MCF 10A (cell line): ENCODE measurements at regions of chr12 and their contacts with region 1.

Region 1: DNA sequence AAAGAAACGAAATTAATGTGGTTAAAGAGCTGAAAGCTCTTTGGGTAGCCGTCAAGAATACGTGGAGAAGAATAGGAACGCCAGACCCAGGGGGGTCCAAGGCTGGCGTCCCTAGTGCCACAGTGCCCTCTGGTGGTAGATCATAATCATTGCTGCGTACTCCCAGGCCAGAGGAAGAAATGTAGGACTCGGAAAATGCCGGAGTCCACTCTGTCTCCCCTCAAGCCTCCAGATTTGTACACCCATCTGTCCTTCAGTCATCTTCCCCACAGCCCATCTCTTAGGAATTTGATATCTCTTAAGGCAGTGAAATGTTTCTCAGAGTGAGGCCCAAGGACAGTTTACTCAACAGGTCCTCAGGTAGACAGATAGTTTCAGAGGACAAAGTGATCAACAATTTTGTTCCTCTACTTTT is 25.4 kb upstream of the PLEKHG6 start:
- DNase-seq: peak; percentile 76
- H3K4me3 Mint-ChIP-seq: no peak overlapping the region
- H3K27ac Mint-ChIP-seq: no peak overlapping the region
- H3K4me1 Mint-ChIP-seq: peaks cover 34% of the 10 kb centered on the region
- H3K27me3 Mint-ChIP-seq: no peaks in the 10 kb centered on the region
- CTCF ChIP-seq: peak; percentile 94

Region 2: DNA sequence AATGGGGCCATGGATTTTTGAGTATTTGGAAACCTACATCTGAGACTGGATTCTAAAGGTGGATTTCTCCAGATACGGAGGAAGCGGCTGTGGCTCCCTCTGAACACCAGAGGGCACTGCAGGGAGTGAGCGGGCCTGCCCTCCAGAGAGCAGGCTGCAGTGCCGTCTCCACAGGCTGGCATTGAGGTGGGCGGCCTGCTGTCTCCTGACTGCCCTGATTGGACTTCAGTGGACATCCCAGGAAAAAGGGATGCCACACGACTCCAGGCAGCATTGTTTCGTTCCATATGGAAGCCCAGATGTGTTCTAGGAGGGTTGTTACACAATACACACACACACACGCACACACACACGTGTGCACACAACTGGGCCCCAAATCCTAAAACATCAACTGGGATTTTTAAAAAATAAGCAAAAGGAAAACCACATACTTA is 319.1 kb before region 1 on chr12:
- CTCF ChIA-PET with region 1: interaction called, 7 read pairs
- POLR2A ChIA-PET with region 1: no interaction called
- intact Hi-C with region 1: loop called (anchors 1 kb)
- DNase-seq: peak; percentile 61
- H3K4me3 Mint-ChIP-seq: no peak overlapping the region
- H3K27ac Mint-ChIP-seq: no peak overlapping the region
- H3K4me1 Mint-ChIP-seq: no peaks in the 10 kb centered on the region
- H3K27me3 Mint-ChIP-seq: peaks cover 50% of the 10 kb centered on the region
- CTCF ChIP-seq: peak; percentile 69

Region 3: GRCh38 chr12:6056406-6057240 is 228.4 kb before region 1 on chr12:
- CTCF ChIA-PET with region 1: interaction called, 37 read pairs
- POLR2A ChIA-PET with region 1: interaction called, 4 read pairs
- intact Hi-C with region 1: no loop called
- DNase-seq: no peak
- H3K4me3 Mint-ChIP-seq: no peak overlapping the region
- H3K27ac Mint-ChIP-seq: no peak overlapping the region
- H3K4me1 Mint-ChIP-seq: no peaks in the 10 kb centered on the region
- H3K27me3 Mint-ChIP-seq: no peaks in the 10 kb centered on the region
- CTCF ChIP-seq: no peak

Region 4: DNA sequence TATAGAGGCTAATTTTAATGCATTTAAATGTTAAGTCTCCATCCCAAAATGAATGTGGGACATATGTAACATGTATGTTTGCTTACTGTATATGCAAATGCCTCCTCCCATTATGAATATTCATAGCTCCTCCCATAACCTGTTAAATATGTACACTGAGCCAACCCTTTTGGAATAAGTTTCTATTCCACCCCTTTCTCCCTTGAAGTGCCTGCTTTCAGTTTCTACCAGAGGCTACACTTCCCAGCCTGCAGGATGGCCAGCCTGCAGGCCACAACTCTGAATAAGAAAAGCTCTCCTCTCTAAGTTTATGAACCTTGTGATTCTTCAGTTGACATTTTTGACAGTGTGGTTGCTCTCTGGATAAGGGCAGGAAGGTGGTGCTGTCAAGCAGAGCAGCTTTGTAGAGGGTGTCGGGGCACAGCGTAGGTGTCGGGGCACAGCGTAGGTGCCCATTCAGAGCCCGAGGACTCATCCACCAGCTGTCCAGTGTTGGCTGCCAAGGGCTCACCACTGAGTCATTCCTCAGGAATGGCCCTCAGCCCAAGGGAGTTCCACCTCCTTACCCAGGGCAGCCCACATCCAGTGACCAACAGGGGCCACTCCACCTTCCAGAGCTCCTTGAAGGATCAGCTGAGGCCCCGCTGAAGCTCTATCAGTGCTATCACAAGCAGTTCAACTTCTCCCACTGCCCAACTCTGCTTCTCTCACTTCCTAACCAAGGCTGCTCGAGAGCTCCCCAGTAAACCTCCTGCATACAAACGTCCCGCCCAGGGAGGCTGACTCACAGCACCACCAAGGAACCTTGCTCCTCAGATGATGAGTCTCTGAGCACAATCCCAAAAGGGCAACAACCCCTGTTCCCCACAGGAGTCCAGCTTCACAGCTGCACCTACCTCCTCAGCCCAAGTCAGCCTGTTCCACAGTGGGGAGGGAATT is 192.0 kb before region 1 on chr12:
- CTCF ChIA-PET with region 1: interaction called, 13 read pairs
- POLR2A ChIA-PET with region 1: interaction called, 8 read pairs
- intact Hi-C with region 1: loop called (anchors 10 kb)
- DNase-seq: peak; percentile 94
- H3K4me3 Mint-ChIP-seq: peak overlapping the region; percentile 54
- H3K27ac Mint-ChIP-seq: peak overlapping the region; percentile 77
- H3K4me1 Mint-ChIP-seq: peaks cover 33% of the 10 kb centered on the region
- H3K27me3 Mint-ChIP-seq: no peaks in the 10 kb centered on the region
- CTCF ChIP-seq: no peak

Region 5: DNA sequence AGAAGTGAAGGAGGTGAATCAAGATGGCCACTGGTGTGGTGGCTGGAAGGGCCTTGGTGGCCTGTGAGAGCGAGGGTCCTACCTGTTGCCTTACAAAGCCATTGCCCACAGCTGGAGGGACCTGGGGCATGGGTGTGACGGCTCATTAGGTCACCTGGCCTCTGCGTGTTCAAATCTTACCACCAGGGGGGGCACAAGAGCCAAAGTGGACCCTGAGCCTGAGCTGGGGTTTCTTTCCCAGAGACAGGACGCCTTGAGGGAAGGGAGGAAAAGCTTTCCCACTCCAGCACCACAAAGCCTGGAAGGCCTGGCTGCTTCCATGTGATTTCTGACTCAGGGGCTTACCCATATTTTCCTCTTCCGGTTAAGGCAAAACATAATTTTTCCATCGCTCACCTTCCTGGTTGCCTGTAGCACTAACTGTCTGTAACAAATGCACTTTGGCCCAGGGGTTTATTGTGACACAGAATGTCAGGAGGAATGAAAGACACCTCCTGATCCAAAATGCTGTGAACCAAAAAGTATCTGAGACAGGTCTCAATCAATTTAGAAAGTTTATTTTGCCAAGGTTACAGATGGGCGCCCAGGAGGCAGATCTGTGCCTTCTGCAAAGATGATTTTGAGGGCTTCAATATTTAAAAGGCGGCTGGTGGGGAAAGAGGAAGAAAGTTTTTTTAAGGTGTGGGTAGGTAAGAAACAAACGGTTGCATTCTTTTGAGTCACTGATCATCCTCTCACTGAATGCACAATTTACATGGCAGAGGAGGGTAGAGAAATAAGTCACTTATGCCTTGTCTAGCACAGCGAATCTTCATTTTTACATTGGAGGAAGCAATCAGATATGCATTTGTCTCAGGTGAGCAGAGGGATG is 89.2 kb before region 1 on chr12:
- CTCF ChIA-PET with region 1: interaction called, 369 read pairs
- POLR2A ChIA-PET with region 1: interaction called, 116 read pairs
- intact Hi-C with region 1: loop called (anchors 1 kb)
- DNase-seq: peak; percentile 92
- H3K4me3 Mint-ChIP-seq: no peak overlapping the region
- H3K27ac Mint-ChIP-seq: peak overlapping the region; percentile 61
- H3K4me1 Mint-ChIP-seq: peaks cover 27% of the 10 kb centered on the region
- H3K27me3 Mint-ChIP-seq: peaks cover 12% of the 10 kb centered on the region
- CTCF ChIP-seq: peak; percentile 88

Region 6: DNA sequence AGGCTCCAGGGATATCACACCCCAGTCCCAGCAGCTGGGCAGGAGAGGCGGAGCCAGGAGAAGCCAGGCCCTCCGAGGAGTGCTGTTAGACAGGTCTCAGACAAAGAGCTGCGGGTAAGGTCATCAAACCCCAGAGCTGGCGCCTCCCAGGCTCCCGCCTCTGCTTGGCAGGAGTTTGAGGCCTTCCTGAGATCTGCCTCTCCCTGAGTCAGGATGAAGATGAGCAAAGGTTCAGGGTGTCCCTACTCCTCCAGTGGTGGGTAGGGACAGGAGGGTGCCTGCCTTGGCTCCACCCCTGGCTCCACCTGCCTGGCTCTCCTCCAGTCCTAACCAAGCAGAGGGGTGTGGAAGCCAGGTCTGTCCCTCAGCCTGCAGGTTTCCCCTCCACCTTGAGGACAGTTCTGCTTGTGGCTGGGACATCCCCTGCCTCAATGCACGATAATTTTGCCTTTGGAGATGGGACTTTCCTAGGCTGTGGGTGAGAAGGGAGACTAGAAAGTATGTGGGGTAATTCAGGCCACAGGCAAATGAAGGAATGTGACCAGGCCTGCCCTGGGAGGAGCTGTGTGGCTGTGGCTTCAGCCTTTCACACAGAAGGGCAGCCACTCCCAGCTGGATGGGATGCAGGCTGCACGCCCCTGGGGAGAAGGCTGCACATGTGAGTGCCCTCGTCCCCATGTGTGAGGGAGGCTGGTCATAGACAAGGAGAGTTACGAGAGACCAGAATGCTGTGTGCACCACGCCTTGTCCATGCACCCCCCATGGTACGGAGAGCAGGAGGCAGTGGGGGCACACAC is 27.7 kb after region 1 on chr12:
- CTCF ChIA-PET with region 1: interaction called, 9 read pairs
- POLR2A ChIA-PET with region 1: interaction called, 14 read pairs
- intact Hi-C with region 1: no loop called
- DNase-seq: peak; percentile 84
- H3K4me3 Mint-ChIP-seq: peak overlapping the region; percentile 24
- H3K27ac Mint-ChIP-seq: peak overlapping the region; percentile 54
- H3K4me1 Mint-ChIP-seq: peaks cover 14% of the 10 kb centered on the region
- H3K27me3 Mint-ChIP-seq: no peaks in the 10 kb centered on the region
- CTCF ChIP-seq: no peak

Region 7: DNA sequence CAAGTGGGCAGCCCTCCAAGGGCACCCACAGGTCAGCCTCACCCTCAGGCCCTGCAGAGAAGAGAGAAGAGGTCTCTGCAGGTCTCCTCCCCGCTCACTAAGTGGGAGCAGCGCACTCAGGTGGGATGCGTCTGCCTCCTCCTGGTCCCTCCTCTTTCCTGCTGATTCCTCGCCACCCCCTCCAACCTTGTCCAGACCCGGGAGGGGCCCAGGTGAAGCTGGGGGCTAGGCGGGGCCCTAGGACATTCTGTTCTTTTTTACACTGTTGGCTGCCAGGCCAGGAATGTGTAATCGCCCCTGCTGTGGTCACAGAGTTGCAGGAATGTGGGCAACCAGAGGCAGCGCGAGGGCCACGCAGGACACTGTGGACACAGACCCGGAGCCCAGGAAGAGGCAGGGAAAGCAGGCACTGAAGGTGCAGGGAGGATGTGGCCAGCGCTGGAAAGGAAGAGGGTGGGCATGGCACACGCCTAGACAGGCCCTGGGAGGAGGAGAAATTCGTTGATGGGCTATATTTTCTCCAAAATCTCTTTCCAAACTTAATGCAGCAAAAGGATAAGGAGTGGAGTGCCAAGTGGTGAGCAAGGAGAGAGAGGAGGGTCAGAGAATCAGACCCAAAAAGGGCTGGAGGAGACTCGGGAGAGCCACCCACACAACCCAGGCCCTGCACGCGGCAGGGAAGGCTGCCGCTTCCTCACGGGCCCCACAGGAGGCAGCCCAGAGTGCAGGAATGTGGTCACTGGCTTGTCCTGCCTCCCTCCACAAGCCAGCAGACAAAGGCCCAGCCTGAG is 91.2 kb after region 1 on chr12:
- CTCF ChIA-PET with region 1: interaction called, 4 read pairs
- POLR2A ChIA-PET with region 1: interaction called, 20 read pairs
- intact Hi-C with region 1: no loop called
- DNase-seq: peak; percentile 97
- H3K4me3 Mint-ChIP-seq: peak overlapping the region; percentile 89
- H3K27ac Mint-ChIP-seq: peak overlapping the region; percentile 97
- H3K4me1 Mint-ChIP-seq: peaks cover 56% of the 10 kb centered on the region
- H3K27me3 Mint-ChIP-seq: no peaks in the 10 kb centered on the region
- CTCF ChIP-seq: no peak